GM12878 (cell line): ENCODE measurements at regions of chr3 and their contacts with region 1.

Region 1: GRCh38 chr3:119570216-119570615 is 9.1 kb upstream of the ADPRH start:
- DNase-seq: no peak
- ATAC-seq: peak; percentile 96
- H3K4me3 ChIP-seq: no peak overlapping the region
- H3K27ac ChIP-seq: peak overlapping the region; percentile 69
- H3K4me1 ChIP-seq: peaks cover 14% of the 10 kb centered on the region
- H3K27me3 ChIP-seq: no peaks in the 10 kb centered on the region
- CTCF ChIP-seq: no peak
- EP300 ChIP-seq: 0 out of 4 replicates have a peak, but pooled peaks of 1 of the 2 experiments have one; percentile 18
- POLR2A ChIP-seq: no peak
- RAD21 ChIP-seq: no peak

Region 2: GRCh38 chr3:119588112-119588511 is 17.9 kb after region 1 on chr3:
- CTCF ChIA-PET with region 1: interaction called, 3 read pairs
- POLR2A ChIA-PET with region 1: interaction called, 46 read pairs
- RAD21 ChIA-PET with region 1: interaction called, 3 read pairs
- SMC1A ChIA-PET with region 1: interaction called, 35 read pairs
- in situ Hi-C with region 1: no loop called
- intact Hi-C with region 1: no loop called
- DNase-seq: no peak
- ATAC-seq: peak; percentile 67
- H3K4me3 ChIP-seq: no peak overlapping the region
- H3K27ac ChIP-seq: peak overlapping the region; percentile 20; the same call in 1 of the 2 replicates
- H3K4me1 ChIP-seq: peaks cover 19% of the 10 kb centered on the region
- H3K27me3 ChIP-seq: no peaks in the 10 kb centered on the region
- CTCF ChIP-seq: no peak
- EP300 ChIP-seq: 0 out of 4 replicates have a peak, but pooled peaks of 1 of the 2 experiments have one; percentile 45
- POLR2A ChIP-seq: no peak
- RAD21 ChIP-seq: no peak